ENCODE measurements at regions of chr2 and their contacts with region 1.

Region 1: GRCh38 chr2:165401285-165401852 is 68.1 kb upstream of the CSRNP3 start:
- DNase-seq: peak in 1 of 5 donors; percentile 11
- ATAC-seq: no peak
- H3K4me3 ChIP-seq: no peak overlapping the region
- H3K27ac ChIP-seq: no peak overlapping the region
- H3K4me1 ChIP-seq: peaks cover 0 to 8% (median 0%) of the 10 kb centered on the region in 12 donors
- H3K27me3 ChIP-seq: peaks cover 0 to 15% (median 0%) of the 10 kb centered on the region in 9 donors
- CTCF ChIP-seq: peak; percentile 60 to 89 (median 77)
- POLR2A ChIP-seq: no peak

Region 2: DNA sequence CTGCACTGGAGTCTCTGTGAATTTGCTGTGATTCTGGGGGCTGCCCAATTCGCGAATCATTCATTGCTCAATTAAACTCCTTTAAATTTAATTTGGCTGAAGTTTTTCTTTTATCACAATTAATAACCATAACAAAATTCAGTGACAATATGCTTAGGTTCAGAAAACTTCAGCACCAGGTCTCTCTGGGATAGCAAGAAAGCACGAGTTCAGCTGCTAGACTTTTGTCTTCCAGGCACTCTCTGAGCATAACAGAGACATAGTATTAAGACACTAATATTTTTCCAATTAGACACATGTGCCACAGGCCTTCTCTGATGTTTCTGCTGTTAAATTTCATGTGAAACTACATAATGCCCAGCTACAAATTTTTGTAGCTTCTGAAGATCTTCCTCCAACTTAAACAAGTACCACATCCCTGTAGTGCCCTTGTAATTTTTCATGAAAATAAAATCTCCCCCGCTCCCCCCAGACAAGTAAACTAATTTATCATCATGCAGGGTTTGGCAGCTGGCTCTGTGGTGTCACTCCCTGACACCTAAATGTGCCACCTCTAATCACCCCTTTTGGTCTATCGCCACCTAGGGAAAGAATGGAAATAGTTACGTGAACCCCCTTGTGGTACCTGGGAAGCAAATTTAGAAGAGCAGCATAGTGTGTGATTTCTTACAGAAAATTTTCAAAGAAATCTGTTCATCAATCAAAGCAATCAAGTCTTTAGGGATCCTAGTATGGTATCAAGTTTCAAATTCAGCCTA is 162.3 kb after region 1 on chr2:
- intact Hi-C with region 1: loop called in 2 of 10 experiments (anchors 10 kb)
- DNase-seq: no peak
- ATAC-seq: no peak
- H3K4me3 ChIP-seq: no peak overlapping the region
- H3K27ac ChIP-seq: no peak overlapping the region
- H3K4me1 ChIP-seq: peaks cover 0 to 17% (median 0%) of the 10 kb centered on the region in 12 donors
- H3K27me3 ChIP-seq: no peaks in the 10 kb centered on the region
- CTCF ChIP-seq: peak in 1 of 12 donors; percentile 7
- POLR2A ChIP-seq: no peak

Region 3: DNA sequence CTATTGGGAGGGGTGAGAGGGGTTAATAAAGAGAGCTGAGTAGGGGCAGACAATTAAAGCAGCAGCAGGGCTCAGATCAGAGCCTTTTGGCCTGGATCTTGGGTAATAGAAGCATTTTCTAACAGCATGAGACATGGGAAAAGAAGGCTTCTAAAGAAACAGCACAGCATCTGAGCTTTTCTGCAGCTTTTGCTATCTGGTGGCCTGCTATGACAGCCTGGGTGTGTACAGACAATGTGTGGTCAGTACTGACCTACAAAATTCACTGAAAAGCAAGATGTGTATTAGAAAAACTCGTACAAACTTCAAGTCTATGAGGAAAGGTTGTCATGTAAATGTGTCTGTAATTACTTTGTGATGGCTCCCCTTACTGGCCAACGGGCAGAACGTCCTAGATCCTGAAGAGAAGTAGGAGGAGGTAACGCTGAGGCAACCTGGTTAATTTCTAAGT is 297.1 kb after region 1 on chr2:
- intact Hi-C with region 1: loop called (anchors 1 to 5 kb)
- DNase-seq: peak in 3 of 5 donors; percentile 13 to 30 (median 25)
- ATAC-seq: peak; percentile 30 to 88 (median 64)
- H3K4me3 ChIP-seq: no peak overlapping the region
- H3K27ac ChIP-seq: no peak overlapping the region
- H3K4me1 ChIP-seq: peaks cover 0 to 7% (median 0%) of the 10 kb centered on the region in 12 donors
- H3K27me3 ChIP-seq: no peaks in the 10 kb centered on the region
- CTCF ChIP-seq: peak in 11 of 12 donors; percentile 22 to 69 (median 50)
- POLR2A ChIP-seq: no peak

Region 4: DNA sequence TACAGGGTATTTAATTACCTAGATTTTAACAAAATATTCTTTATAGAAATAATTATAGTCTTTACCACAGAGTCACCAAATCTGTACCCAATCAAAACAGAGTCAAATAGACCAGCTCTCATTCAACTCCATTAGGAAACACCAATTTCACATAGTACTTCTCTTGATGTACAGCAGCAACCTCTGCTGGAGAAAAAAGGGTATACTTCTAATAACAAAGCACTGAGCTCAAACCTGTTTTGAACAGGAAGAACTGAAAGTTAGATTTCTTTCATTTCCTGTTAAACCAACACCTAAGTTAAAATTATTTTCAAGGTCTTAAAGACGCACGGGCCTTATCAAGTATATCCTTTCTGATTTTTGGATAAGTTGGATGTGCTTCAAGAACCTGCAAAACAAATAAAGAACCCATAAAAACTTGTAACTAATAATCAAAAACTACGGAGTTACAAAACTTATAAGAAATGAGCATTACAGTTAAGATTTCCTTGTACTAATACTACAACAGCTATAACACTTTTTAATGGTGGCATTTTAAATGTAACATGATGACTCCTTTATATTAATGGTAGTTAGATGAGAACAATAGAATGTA is 473.2 kb after region 1 on chr2:
- intact Hi-C with region 1: loop called (anchors 1 to 5 kb)
- DNase-seq: no peak
- ATAC-seq: peak in 3 of 4 donors; percentile 42 to 71 (median 63)
- H3K4me3 ChIP-seq: no peak overlapping the region
- H3K27ac ChIP-seq: no peak overlapping the region
- H3K4me1 ChIP-seq: peaks cover 0 to 18% (median 0%) of the 10 kb centered on the region in 12 donors
- H3K27me3 ChIP-seq: no peaks in the 10 kb centered on the region
- CTCF ChIP-seq: peak; percentile 34 to 78 (median 62)
- POLR2A ChIP-seq: no peak

Measured in heart left ventricle (tissue), 16 donors.